GM18951 (cell line): ENCODE measurements at regions of chr14 and their contacts with region 1.

Region 1: GRCh38 chr14:56491299-56492285 is 88.0 kb upstream of the TMEM260 start:
- POLR2A ChIP-seq: no peak

Region 2: GRCh38 chr14:55731881-55732498 is 759.6 kb before region 1 on chr14:
- in situ Hi-C with region 1: loop called (anchors 25 kb)
- POLR2A ChIP-seq: no peak

Region 3: GRCh38 chr14:57182760-57183503 is 691.3 kb after region 1 on chr14:
- in situ Hi-C with region 1: loop called (anchors 25 kb)
- POLR2A ChIP-seq: no peak

Region 4: GRCh38 chr14:57317316-57317715 is 825.7 kb after region 1 on chr14:
- in situ Hi-C with region 1: loop called (anchors 25 kb)
- POLR2A ChIP-seq: no peak